ENCODE measurements at regions of chr1 and their contacts with region 1.

Region 1: GRCh38 chr1:43763497-43763973 is 56.2 kb downstream of the ST3GAL3 start:
- DNase-seq: peak; percentile 84
- H3K4me3 ChIP-seq: no peak overlapping the region
- H3K27ac ChIP-seq: peak overlapping the region; percentile 46
- H3K4me1 ChIP-seq: peaks cover 48% of the 10 kb centered on the region
- H3K27me3 ChIP-seq: no peaks in the 10 kb centered on the region
- CTCF ChIP-seq: peak; percentile 87 to 93

Region 2: GRCh38 chr1:43668956-43669355 is 94.6 kb before region 1 on chr1:
- CTCF ChIA-PET with region 1: no interaction called
- dilution Hi-C with region 1: loop called (anchors 5 kb)
- in situ Hi-C with region 1: loop called in 1 of 2 experiments (anchors 25 kb)
- intact Hi-C with region 1: no loop called
- DNase-seq: peak; percentile 65
- H3K4me3 ChIP-seq: no peak overlapping the region
- H3K27ac ChIP-seq: peak overlapping the region; percentile 21
- H3K4me1 ChIP-seq: peaks cover 45% of the 10 kb centered on the region
- H3K27me3 ChIP-seq: no peaks in the 10 kb centered on the region
- CTCF ChIP-seq: no peak

Region 3: GRCh38 chr1:43912607-43913006 is 149.1 kb after region 1 on chr1:
- CTCF ChIA-PET with region 1: interaction called, 5 read pairs
- dilution Hi-C with region 1: no loop called
- in situ Hi-C with region 1: no loop called
- intact Hi-C with region 1: loop called (anchors 1 kb)
- DNase-seq: peak; percentile 83
- H3K4me3 ChIP-seq: peak overlapping the region in 1 of 3 experiments; percentile 9
- H3K27ac ChIP-seq: peak overlapping the region; percentile 75
- H3K4me1 ChIP-seq: peaks cover 41% of the 10 kb centered on the region
- H3K27me3 ChIP-seq: no peaks in the 10 kb centered on the region
- CTCF ChIP-seq: no peak

Region 4: GRCh38 chr1:43979528-43980254 is 216.2 kb after region 1 on chr1:
- CTCF ChIA-PET with region 1: interaction called, 8 read pairs
- dilution Hi-C with region 1: loop called (anchors 10 kb)
- in situ Hi-C with region 1: no loop called
- intact Hi-C with region 1: loop called (anchors 1 kb)
- DNase-seq: peak; percentile 53
- H3K4me3 ChIP-seq: peak overlapping the region; percentile 59 to 65 (median 61)
- H3K27ac ChIP-seq: peak overlapping the region; percentile 64
- H3K4me1 ChIP-seq: peaks cover 58% of the 10 kb centered on the region
- H3K27me3 ChIP-seq: no peaks in the 10 kb centered on the region
- CTCF ChIP-seq: no peak

Region 5: DNA sequence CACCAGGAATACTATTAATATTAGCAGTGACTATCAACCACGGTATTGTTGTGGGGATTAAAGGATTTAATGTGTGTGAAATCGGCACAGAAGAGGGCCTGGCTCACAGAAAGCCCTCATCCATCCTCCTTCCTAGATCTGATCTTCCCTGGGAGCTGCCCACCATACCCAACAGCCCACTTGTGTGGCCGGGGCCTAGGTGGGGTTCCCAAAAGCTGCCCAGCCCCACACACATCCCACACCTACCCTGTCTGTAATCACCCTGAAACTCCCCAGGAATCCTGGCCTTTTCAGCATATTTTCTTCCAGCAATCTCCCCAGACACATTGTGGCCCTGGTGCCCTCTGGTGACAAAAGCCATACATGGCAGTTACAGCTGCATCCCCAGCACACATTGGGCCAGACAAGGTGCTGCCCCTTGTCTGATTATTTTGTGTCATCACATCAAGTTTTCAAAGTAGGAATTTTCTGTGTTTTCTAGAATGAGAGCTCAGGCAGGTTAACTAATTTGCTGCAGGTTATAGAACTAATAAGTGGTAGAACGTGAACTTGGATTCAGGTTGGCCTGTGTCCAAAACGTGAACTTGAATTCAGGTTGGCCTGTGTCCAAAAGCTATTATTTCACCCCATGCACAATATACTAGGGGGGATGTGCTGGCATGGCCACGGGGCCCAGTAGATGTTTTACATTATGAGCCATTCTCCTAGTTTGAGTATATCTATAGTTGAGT is 273.0 kb after region 1 on chr1:
- CTCF ChIA-PET with region 1: interaction called, 5 read pairs
- dilution Hi-C with region 1: no loop called
- in situ Hi-C with region 1: no loop called
- intact Hi-C with region 1: loop called (anchors 1 kb)
- DNase-seq: peak; percentile 62
- H3K4me3 ChIP-seq: no peak overlapping the region
- H3K27ac ChIP-seq: no peak overlapping the region
- H3K4me1 ChIP-seq: peaks cover 26% of the 10 kb centered on the region
- H3K27me3 ChIP-seq: no peaks in the 10 kb centered on the region
- CTCF ChIP-seq: peak; percentile 88 to 95